HCT116 (cell line): ENCODE measurements at regions of chr15 and their contacts with region 1.

Region 1: DNA sequence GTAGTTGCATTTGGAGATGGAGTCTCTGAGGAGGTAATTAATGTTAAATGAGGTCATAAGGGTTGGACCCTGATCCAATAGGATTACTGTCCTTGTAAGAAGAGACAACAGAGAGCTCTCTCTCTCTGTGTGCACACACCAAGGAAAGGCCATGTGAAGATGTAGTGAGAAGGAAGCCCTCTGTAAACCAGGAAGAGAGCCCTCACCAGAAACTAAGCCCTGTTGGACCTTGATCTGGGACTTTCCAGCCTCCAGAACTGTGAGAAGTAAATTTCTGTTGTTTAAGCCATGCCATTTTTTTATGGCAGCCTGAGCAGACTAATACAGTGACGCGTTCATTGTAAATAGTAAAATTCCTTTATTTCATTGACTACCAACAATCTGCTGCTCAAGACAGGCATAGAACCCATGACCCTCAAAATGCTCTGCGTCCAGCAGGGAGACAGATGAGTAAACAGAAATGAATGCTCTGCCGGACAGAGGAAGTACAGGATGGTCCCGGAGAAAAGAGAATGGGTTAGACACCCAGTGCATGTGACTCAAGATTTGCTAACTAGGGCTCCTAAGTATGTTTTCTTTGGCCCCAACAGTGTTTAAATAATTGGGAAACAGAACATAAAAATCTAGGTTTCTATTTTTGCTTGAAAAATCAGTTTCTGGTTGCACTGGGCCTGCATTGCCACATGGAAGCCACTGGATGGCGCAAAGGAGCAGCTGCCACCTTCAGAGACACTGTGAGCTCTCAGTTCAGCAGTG is 37.9 kb upstream of the TNFAIP8L3 start:
- DNase-seq: peak; percentile 15
- ATAC-seq: peak; percentile 91
- H3K4me3 ChIP-seq: no peak overlapping the region
- H3K27ac ChIP-seq: no peak overlapping the region
- H3K4me1 ChIP-seq: peaks cover 0 to 11% of the 10 kb centered on the region in 2 experiments; a peak in 2 of 4 replicates
- H3K27me3 ChIP-seq: no peaks in the 10 kb centered on the region
- CTCF ChIP-seq: peak; percentile 43 to 98 (median 94); a peak in 5 of 6 replicates
- POLR2A ChIP-seq: no peak
- RAD21 ChIP-seq: peak; percentile 51; the same call in 1 of the 2 replicates

Region 2: GRCh38 chr15:51144021-51144532 is 11.5 kb after region 1 on chr15:
- CTCF ChIA-PET with region 1: interaction called, 10 read pairs
- POLR2A ChIA-PET with region 1: no interaction called
- RAD21 ChIA-PET with region 1: interaction called in 1 of 2 experiments, 3 read pairs
- intact Hi-C with region 1: no loop called
- DNase-seq: peak; percentile 34
- ATAC-seq: peak; percentile 70
- H3K4me3 ChIP-seq: 0 out of 4 replicates have a peak overlapping the region, but pooled peaks of 1 of the 2 experiments have one; percentile 14
- H3K27ac ChIP-seq: no peak overlapping the region
- H3K4me1 ChIP-seq: peaks cover 4 to 11% of the 10 kb centered on the region in 2 experiments; a peak in 3 of 4 replicates
- H3K27me3 ChIP-seq: no peaks in the 10 kb centered on the region
- CTCF ChIP-seq: no peak
- POLR2A ChIP-seq: no peak
- RAD21 ChIP-seq: no peak

Region 3: GRCh38 chr15:51192521-51193280 is 60.1 kb after region 1 on chr15:
- CTCF ChIA-PET with region 1: interaction called, 21 read pairs
- POLR2A ChIA-PET with region 1: no interaction called
- RAD21 ChIA-PET with region 1: no interaction called
- intact Hi-C with region 1: no loop called
- DNase-seq: peak; percentile 61
- ATAC-seq: peak; percentile 99
- H3K4me3 ChIP-seq: no peak overlapping the region
- H3K27ac ChIP-seq: no peak overlapping the region
- H3K4me1 ChIP-seq: peaks cover 0 to 4% of the 10 kb centered on the region in 2 experiments; a peak in 3 of 4 replicates
- H3K27me3 ChIP-seq: no peaks in the 10 kb centered on the region; the same call in 1 of the 2 replicates
- CTCF ChIP-seq: peak; percentile 66 to 97 (median 96); a peak in 5 of 6 replicates
- POLR2A ChIP-seq: no peak
- RAD21 ChIP-seq: peak; percentile 73